Right ventricle myocardium inferior (tissue), 1 donor: ENCODE measurements at regions of chr6 and their contacts with region 1.

Region 1: DNA sequence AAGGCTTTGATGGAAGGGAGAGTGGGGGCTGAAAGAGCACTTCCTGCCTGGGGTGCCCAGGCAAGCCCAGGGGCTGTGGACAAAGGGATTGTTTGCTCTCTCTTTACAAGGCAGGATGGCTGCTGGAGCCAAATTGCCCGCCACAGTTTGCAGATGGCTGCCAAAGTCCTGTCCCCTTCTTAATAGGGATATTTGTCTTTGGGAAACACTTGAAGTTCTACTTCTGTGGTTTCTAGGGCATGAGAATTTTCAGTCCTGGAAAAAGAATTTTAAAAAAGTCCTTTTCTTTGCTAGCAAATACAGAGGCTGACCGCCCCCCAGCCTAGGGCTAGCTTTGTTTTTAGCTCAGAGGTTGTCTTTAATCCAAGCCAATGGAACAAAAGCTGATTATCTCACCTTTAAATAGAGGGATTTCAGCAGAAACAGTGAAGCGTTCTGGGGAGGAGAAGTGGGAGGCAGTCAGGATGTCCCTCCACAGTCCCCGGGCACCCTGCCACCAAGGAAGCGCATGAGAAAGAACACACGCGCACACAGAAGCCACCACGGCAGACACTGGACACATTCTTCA is 736.7 kb downstream of the QKI start:
- DNase-seq: peak; percentile 79
- ATAC-seq: peak; percentile 48

Region 2: GRCh38 chr6:163419413-163420288 is 731.6 kb before region 1 on chr6:
- intact Hi-C with region 1: loop called (anchors 5 kb)
- DNase-seq: no peak
- ATAC-seq: no peak

Region 3: DNA sequence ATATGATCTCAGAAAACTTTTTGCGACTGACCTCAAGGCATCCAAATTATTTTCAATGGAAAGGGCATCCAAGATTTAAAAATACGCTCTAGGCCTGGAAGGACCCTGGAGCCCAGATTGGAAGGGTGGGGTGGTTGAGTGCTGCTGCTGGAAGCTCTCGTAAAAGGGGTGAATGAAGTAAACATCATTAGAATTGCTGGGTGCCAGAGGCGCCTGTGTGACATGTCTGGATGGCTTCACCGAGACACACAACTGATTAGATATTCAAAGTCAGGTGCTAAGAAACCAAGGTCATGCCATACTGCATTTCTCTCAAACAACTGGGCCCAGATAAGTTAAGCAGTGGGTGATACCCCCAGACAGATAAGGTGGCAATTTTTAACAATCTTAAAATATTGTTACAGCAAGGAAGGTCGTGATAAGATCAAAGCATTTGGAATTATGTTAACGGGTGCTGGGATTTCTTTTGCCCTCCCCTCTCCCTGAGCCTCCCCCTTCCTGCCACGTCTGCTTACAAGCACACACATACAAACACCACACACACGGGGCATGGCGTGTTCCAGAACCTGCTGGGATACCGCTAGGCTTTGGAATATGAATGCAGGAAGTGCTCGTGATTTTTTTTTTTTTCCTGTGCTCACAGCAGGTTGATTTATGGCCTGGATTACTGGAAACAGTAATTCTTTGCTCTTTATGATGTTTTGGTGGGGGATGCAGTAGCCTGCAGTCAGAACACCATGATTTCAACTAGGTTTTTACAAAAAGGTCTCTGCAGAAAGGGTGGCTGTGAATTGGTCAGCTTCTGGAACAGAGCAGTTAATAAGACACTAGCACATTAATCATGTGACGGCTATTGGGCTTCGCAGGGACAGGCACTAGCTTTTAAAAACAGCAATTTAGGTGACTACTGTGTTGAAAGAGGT is 185.6 kb before region 1 on chr6:
- intact Hi-C with region 1: loop called (anchors 2 kb)
- DNase-seq: no peak
- ATAC-seq: peak; percentile 58

Region 4: DNA sequence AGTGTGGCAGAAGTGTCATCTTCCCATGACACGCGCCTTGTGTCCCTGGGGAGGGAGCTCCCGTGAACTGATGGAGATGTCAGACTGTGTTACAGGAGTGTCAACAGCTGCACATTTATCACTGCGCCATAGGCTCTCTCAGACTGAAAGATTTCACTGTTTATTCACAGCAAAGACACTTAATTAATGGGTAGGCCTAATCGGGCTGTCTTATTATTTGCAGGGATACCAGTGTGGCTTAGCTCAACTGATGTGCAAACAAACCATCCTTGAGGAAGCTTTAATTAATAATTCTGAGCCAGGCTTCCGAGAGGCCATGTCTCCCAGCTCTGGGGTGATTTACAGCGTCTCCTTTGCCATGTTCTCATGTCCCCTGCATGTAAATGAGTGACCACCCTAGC is 34.2 kb after region 1 on chr6:
- intact Hi-C with region 1: no loop called
- DNase-seq: no peak
- ATAC-seq: no peak